T-cell (primary cell): ENCODE measurements at regions of chr1 and their contacts with region 1.

Region 1: DNA sequence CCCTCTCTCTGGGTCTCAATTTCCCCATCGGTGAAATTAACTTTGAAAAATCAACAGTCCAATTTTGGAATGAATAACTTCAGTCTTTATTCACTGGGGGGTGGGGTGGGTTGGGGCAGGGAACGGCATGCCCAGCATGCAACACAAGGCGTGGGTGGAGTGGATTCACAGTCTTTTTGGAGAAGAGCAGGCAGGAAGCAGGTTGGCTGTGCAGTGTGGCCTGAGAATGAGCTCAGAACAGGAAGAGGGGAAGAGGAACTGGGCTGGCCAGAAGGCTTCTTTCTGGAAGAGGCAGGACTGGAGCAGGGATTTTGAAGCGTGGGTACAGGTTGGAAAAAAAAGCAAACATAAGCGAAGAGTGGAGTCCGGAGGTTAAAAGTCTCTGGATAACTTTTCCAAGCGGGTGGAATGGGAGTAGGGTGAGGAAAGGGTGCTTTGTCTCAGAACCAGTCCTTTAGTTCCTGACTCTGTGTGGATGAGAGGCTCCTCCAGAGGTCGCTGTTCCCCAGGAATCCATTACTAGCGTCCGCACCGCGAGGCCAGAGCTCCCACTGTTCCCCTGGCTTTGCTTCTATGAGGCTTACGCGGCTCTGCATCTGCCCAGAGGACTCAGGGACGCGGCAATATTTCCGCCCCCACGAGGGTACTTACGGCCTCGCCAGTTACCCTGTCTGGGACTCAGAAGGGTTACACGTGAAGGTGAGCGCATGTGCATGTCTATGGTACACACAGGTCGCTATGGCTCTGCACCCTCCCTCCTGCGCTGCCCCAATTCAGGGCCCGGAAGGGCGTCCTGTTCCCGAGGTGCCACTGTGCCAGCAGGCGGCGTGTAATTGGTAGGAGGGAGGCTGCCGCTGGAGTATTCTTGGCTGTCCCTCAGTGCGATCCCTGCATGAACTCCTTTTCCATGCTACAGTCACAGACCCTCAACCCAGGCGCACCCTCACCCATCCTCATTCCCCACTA is 5.5 kb upstream of the FOXD2 start:
- DNase-seq: peak in 34 of 35 experiments; percentile 16 to 77 (median 51)
- ATAC-seq: peak; percentile 33 to 54 (median 45)
- H3K4me3 ChIP-seq: peak overlapping the region; percentile 32 to 65
- H3K4me3 Mint-ChIP-seq: peak overlapping the region; percentile 45 to 80 (median 47)
- H3K27ac ChIP-seq: no peak overlapping the region
- H3K27ac Mint-ChIP-seq: no peak overlapping the region
- H3K4me1 ChIP-seq: peaks cover 5 to 43% of the 10 kb centered on the region in 2 experiments
- H3K4me1 Mint-ChIP-seq: peaks cover 37 to 41% (median 37%) of the 10 kb centered on the region in 3 donors
- H3K27me3 ChIP-seq: peaks cover 11 to 53% of the 10 kb centered on the region in 2 experiments
- H3K27me3 Mint-ChIP-seq: peaks cover 26 to 30% of the 10 kb centered on the region in 2 donors

Region 2: GRCh38 chr1:47469390-47469759 is 37.0 kb after region 1 on chr1:
- CTCF ChIA-PET with region 1: no interaction called
- POLR2A ChIA-PET with region 1: no interaction called
- DNase-seq: no peak
- ATAC-seq: no peak
- H3K4me3 ChIP-seq: no peak overlapping the region
- H3K4me3 Mint-ChIP-seq: no peak overlapping the region
- H3K27ac ChIP-seq: no peak overlapping the region
- H3K27ac Mint-ChIP-seq: no peak overlapping the region
- H3K4me1 ChIP-seq: no peaks in the 10 kb centered on the region
- H3K4me1 Mint-ChIP-seq: no peaks in the 10 kb centered on the region
- H3K27me3 ChIP-seq: peaks cover 0 to 39% of the 10 kb centered on the region in 2 experiments
- H3K27me3 Mint-ChIP-seq: peaks cover 20 to 31% of the 10 kb centered on the region in 2 donors

Region 3: GRCh38 chr1:47725992-47726855 is 293.9 kb after region 1 on chr1:
- CTCF ChIA-PET with region 1: interaction called, 4 to 24 read pairs
- POLR2A ChIA-PET with region 1: no interaction called
- DNase-seq: peak; percentile 7 to 69 (median 44)
- ATAC-seq: peak; percentile 78 to 88 (median 83)
- H3K4me3 ChIP-seq: no peak overlapping the region
- H3K4me3 Mint-ChIP-seq: peak overlapping the region; percentile 51 to 60 (median 60)
- H3K27ac ChIP-seq: no peak overlapping the region
- H3K27ac Mint-ChIP-seq: no peak overlapping the region
- H3K4me1 ChIP-seq: peaks cover 0 to 9% of the 10 kb centered on the region in 2 experiments
- H3K4me1 Mint-ChIP-seq: peaks cover 9 to 12% (median 11%) of the 10 kb centered on the region in 3 donors
- H3K27me3 ChIP-seq: peaks cover 10 to 53% of the 10 kb centered on the region in 2 experiments
- H3K27me3 Mint-ChIP-seq: peaks cover 42 to 56% of the 10 kb centered on the region in 2 donors